GM10248 (cell line): ENCODE measurements at regions of chr5 and their contacts with region 1.

Region 1: GRCh38 chr5:103487218-103487617 is 75.4 kb downstream of the NUDT12 start:
- DNase-seq: no peak
- CTCF ChIP-seq: no peak

Region 2: DNA sequence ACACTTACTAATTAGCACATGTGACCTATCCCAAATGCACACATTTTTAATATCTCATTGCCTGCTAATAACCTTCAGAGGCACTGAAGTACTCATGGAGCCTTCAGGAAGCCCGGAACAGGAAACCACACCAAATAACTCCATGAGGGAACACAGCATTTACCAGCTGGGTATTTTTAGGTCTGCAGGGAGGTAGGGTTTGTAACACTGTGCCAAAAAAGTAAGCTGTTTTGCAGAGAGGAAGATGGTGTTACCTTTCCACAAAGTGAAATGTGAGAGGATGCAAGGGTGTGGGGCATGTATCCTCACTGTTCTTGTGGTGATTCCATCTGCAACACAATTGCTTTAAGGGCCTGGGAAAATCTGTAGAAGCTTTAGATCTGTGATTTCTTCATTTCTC is 11.0 kb after region 1 on chr5:
- CTCF ChIA-PET with region 1: interaction called, 10 read pairs
- POLR2A ChIA-PET with region 1: no interaction called
- DNase-seq: no peak
- CTCF ChIP-seq: no peak

Region 3: GRCh38 chr5:103587185-103587748 is 100.0 kb after region 1 on chr5:
- CTCF ChIA-PET with region 1: no interaction called
- POLR2A ChIA-PET with region 1: no interaction called
- DNase-seq: no peak
- CTCF ChIP-seq: peak; percentile 27